ENCODE measurements at regions of chr19 and their contacts with region 1.

Region 1: DNA sequence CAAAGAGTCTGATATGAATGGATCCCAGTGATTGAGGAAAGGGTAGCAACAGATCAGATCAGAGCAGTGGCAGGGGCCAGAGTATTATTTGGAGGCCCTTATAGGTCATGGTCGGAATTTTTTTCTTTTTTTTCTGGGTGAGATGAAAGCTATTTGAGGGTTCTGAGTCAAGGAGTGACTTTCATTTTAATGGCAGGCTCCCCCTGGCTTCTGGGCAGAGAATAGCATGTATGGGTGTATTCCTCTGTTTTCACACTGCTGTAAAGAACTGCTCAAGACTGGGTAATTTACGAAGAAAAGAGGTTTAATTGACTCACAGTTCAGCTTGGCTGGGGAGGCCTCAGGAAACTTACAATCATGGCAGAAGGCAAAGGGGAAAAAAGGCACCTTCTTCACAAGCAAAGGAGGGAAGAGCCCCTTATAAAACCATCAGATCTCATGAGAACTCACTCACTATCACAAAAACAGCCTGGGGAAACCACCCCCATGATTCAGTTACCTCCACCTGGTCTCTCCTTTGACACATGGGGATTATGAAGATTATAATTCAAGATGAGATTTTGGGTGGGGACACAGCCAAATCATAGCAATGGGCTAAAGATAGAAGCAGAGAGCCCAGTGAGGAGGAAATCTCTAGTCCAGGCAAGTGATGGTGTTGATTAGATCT is 3.0 kb upstream of the SLC6A16 start:
- DNase-seq: peak; percentile 34
- H3K4me3 ChIP-seq: no peak overlapping the region
- H3K27ac ChIP-seq: no peak overlapping the region
- H3K4me1 ChIP-seq: no peaks in the 10 kb centered on the region
- H3K27me3 ChIP-seq: no peaks in the 10 kb centered on the region
- CTCF ChIP-seq: peak; percentile 56 to 73 (median 60)
- EP300 ChIP-seq: no peak
- POLR2A ChIP-seq: no peak

Region 2: GRCh38 chr19:49224856-49225255 is 103.2 kb before region 1 on chr19:
- intact Hi-C with region 1: loop called (anchors 10 kb)
- DNase-seq: no peak
- H3K4me3 ChIP-seq: no peak overlapping the region
- H3K27ac ChIP-seq: no peak overlapping the region
- H3K4me1 ChIP-seq: peaks cover 0 to 10% (median 6%) of the 10 kb centered on the region in 4 donors
- H3K27me3 ChIP-seq: no peaks in the 10 kb centered on the region
- CTCF ChIP-seq: peak in 1 of 3 experiments; percentile 18
- EP300 ChIP-seq: no peak
- POLR2A ChIP-seq: no peak

Region 3: DNA sequence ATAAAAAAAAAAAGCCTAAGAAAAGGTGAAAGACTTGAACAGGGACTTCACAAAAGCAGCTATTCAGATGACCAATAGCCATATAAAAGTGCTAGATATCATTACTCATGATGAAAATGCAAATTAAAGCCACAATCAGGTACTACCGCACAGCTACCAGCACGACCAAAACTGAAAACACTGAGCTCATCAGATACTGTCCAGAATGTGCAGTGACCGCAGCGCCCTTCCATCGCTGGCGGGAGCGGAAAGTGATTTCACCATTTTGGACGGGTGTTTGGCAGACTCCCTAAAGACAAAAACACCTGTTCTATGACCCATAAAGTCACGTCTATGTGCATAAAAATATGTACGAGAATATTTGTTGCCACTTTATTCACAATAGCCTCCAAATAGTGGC is 63.8 kb before region 1 on chr19:
- intact Hi-C with region 1: loop called (anchors 10 kb)
- DNase-seq: no peak
- H3K4me3 ChIP-seq: no peak overlapping the region
- H3K27ac ChIP-seq: no peak overlapping the region
- H3K4me1 ChIP-seq: no peaks in the 10 kb centered on the region
- H3K27me3 ChIP-seq: peaks cover 0 to 7% (median 0%) of the 10 kb centered on the region in 4 donors
- CTCF ChIP-seq: no peak
- EP300 ChIP-seq: no peak
- POLR2A ChIP-seq: no peak

Region 4: DNA sequence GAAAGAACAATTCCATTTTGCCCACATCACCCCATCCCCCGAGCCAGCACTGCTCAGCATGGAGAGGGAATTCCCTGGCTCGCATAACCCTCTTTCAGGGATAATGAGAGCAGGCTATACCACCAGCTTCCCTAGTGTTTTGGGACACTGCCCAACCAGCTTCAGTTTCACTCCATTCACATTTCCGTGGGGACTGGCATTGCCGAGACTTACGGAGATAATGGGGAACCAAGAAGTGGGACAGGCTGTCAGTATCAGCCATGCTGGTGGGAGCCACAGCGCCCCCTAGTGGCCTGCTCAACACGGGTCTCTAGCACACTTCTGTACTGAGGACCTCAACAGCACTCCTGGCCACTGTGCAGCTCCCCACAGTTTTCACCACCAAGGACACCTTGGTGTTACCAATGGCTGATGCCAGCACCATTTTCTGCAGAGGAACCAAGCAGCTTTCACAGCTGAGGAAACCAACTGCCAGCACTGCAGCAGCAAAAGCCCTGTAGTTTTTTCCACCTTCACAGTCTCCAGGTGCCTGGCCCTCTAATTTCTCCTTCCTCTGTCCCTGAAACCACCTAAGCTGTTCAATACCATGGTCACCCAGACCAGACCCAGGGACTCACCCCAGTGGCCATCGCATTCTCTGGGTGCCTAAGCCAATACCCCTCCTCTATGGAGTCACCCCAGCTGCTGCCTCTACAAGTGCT is 26.7 kb before region 1 on chr19:
- intact Hi-C with region 1: no loop called
- DNase-seq: no peak
- H3K4me3 ChIP-seq: peak overlapping the region in 1 of 4 donors; percentile 33
- H3K27ac ChIP-seq: no peak overlapping the region
- H3K4me1 ChIP-seq: peaks cover 0 to 11% (median 5%) of the 10 kb centered on the region in 4 donors
- H3K27me3 ChIP-seq: no peaks in the 10 kb centered on the region
- CTCF ChIP-seq: peak; percentile 54 to 74 (median 67)
- EP300 ChIP-seq: no peak
- POLR2A ChIP-seq: no peak